GM13977 (cell line): ENCODE measurements at regions of chr11 and their contacts with region 1.

Region 1: GRCh38 chr11:100855466-100856067 is 168.5 kb downstream of the ARHGAP42 start:
- DNase-seq: peak; percentile 10
- CTCF ChIP-seq: peak; percentile 46

Region 2: DNA sequence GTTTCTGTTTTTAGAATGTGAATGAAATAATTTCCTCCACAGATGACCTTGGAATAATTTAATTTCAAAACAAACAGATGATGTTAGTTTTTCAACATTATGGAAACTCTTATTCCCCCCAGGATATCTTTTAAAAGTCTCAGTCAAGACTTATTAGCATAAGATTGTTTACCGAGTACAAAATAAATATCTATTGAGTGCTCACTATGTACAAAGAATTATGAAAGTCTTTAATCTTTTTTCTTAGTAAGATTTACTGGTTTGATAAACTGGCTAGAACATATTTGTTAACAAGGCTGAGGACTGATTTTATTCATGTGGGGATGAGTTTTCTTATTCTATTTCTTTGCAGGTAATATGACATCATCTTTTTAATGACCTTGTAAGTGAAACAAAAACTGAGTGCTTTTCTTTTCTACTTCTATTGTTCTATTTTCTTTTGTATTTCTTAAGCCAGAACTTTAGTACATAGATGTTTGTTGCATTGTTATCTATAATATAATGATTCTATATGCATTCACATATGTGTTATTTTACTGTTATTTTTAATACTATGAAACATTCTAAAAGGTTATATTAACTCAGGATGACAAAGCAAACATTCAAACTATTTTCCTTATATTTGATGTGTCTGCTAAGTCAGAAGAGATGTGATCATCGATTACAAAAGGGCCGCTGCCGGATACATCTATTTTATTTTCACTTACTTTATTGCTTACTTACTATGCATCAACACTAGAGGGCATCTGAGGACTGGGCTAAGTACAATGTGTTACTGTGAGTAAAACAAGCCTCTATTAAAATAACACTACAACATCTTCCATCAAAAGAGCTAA is 279.5 kb before region 1 on chr11:
- in situ Hi-C with region 1: loop called (anchors 25 kb)
- DNase-seq: peak; percentile 40
- CTCF ChIP-seq: peak; percentile 75

Region 3: GRCh38 chr11:100753172-100753543 is 102.4 kb before region 1 on chr11:
- in situ Hi-C with region 1: loop called (anchors 25 kb)
- DNase-seq: no peak
- CTCF ChIP-seq: no peak